Ovary (tissue), 10 donors: ENCODE measurements at regions of chr3 and their contacts with region 1.

Region 1: DNA sequence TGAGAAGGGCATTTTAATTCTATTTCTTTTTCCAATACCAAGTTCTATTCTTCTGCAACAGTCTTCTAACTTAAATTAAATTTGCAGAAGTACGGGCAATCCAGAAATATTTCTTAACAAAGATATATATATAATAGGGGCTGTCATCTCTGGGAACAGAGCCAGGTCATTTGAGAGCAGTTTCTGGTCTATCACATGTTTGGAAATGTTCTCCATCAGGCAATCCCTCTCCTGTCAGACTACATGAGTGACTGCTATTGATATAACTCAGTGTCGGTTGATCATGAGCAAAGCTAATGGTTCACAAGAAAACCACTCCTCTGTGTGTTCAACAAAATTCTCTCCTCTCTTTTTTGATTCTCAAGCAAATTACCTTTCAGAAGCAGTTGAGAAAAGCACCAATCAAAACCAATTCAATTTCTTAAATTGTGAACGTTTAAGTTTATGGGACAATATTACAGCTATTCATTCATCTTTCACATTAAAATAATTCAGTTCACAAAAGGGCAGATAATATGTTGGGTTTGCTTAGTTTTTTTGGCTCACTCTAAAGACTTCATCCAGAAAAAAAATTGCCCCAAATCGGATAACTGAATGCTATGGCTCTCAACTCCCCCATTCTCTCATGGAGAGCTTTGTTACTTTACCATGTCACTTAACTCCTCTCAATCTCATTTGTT is 152.9 kb upstream of the TGFBR2 start:
- DNase-seq: no peak
- H3K4me3 ChIP-seq: no peak overlapping the region
- H3K27ac ChIP-seq: no peak overlapping the region
- H3K4me1 ChIP-seq: no peaks in the 10 kb centered on the region
- H3K27me3 ChIP-seq: no peaks in the 10 kb centered on the region
- CTCF ChIP-seq: no peak
- EP300 ChIP-seq: no peak
- POLR2A ChIP-seq: no peak

Region 2: GRCh38 chr3:30527720-30528119 is 74.2 kb after region 1 on chr3:
- intact Hi-C with region 1: no loop called
- DNase-seq: no peak
- H3K4me3 ChIP-seq: no peak overlapping the region
- H3K27ac ChIP-seq: no peak overlapping the region
- H3K4me1 ChIP-seq: no peaks in the 10 kb centered on the region
- H3K27me3 ChIP-seq: no peaks in the 10 kb centered on the region
- CTCF ChIP-seq: no peak
- EP300 ChIP-seq: no peak
- POLR2A ChIP-seq: no peak

Region 3: GRCh38 chr3:30567139-30567753 is 113.7 kb after region 1 on chr3:
- intact Hi-C with region 1: no loop called
- DNase-seq: no peak
- H3K4me3 ChIP-seq: no peak overlapping the region
- H3K27ac ChIP-seq: no peak overlapping the region
- H3K4me1 ChIP-seq: no peaks in the 10 kb centered on the region
- H3K27me3 ChIP-seq: no peaks in the 10 kb centered on the region
- CTCF ChIP-seq: no peak
- EP300 ChIP-seq: no peak
- POLR2A ChIP-seq: no peak

Region 4: DNA sequence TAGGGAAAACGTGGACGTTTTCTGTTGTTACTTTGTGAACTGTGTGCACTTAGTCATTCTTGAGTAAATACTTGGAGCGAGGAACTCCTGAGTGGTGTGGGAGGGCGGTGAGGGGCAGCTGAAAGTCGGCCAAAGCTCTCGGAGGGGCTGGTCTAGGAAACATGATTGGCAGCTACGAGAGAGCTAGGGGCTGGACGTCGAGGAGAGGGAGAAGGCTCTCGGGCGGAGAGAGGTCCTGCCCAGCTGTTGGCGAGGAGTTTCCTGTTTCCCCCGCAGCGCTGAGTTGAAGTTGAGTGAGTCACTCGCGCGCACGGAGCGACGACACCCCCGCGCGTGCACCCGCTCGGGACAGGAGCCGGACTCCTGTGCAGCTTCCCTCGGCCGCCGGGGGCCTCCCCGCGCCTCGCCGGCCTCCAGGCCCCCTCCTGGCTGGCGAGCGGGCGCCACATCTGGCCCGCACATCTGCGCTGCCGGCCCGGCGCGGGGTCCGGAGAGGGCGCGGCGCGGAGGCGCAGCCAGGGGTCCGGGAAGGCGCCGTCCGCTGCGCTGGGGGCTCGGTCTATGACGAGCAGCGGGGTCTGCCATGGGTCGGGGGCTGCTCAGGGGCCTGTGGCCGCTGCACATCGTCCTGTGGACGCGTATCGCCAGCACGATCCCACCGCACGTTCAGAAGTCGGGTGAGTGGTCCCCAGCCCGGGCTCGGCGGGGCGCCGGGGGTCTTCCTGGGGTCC is 153.0 kb after region 1 on chr3 and contains the start of gene TGFBR2:
- intact Hi-C with region 1: loop called in 1 of 4 experiments (anchors 10 kb)
- DNase-seq: peak; percentile 89 to 94 (median 91)
- H3K4me3 ChIP-seq: peak within 1 kb of the TSS; percentile 83
- H3K27ac ChIP-seq: peak within 1 kb of the TSS; percentile 86 to 92
- H3K4me1 ChIP-seq: no peaks in the 10 kb centered on the region
- H3K27me3 ChIP-seq: no peaks in the 10 kb centered on the region
- CTCF ChIP-seq: peak in 2 of 3 donors; percentile 38 to 69
- EP300 ChIP-seq: no peak
- POLR2A ChIP-seq: peak; percentile 76
- total RNA-seq, gene TGFBR2: 26.8 to 62.8 (median 53.8) TPM